Naive thymus-derived CD4-positive, alpha-beta T cell (primary cell): ENCODE measurements at regions of chr3 and their contacts with region 1.

Region 1: DNA sequence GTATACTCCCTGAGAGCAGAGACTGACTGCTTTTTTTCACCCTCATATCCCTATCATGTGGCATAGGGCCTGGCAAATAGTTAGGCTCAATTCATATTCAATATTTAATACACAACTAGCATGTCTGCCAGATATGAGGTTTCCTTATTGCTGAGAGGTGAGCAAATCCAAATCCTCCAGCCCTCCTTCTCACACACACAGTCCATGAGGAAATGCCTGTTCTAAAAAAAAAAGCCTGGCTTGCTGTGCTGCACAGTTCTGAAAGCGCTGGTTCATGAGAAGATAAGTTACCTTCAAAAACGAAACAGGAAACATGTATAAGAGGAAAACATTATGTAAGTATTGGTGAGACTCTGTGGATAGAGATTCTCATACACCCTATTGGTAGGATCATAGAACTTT is 15.5 kb upstream of the ACAP2 start:
- DNase-seq: peak in 7 of 9 donors; percentile 27 to 71 (median 52)
- ATAC-seq: peak; percentile 92
- H3K4me3 ChIP-seq: peak overlapping the region; percentile 45
- H3K4me3 Mint-ChIP-seq: peak overlapping the region; percentile 34 to 90 (median 77)
- H3K27ac ChIP-seq: peak overlapping the region; percentile 59
- H3K27ac Mint-ChIP-seq: peak overlapping the region; percentile 74 to 98 (median 94)
- H3K4me1 ChIP-seq: peaks cover 7 to 16% of the 10 kb centered on the region in 2 donors
- H3K4me1 Mint-ChIP-seq: peaks cover 7 to 37% (median 25%) of the 10 kb centered on the region in 7 donors
- H3K27me3 ChIP-seq: no peaks in the 10 kb centered on the region
- H3K27me3 Mint-ChIP-seq: peaks cover 0 to 5% (median 0%) of the 10 kb centered on the region in 5 donors

Region 2: DNA sequence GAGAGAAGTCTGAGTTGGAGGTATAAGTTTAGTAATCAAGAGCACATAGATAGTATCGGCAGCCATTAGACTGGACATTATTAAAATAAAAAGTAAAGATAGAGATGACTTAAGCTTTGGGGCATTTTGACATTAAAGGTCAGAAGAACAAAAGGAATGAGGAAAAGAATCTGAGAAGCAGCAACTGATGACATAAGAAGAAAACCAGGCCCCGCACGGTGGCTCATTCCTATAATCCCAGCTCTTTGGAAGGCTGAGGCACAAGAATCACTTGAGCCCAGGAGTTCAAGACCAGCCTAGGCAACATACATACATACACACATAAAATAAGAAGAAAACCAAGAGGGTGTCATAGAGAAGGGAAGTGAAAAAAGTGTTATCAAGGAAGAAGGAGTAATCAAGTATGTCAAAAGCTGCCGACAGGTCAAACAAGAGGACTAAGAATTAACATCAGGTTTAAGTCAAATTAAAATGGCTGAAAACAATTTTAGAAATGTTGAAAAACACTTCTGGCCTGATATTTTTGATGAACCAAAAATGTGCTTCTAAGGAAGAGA is 54.4 kb before region 1 on chr3:
- CTCF ChIA-PET with region 1: no interaction called
- POLR2A ChIA-PET with region 1: no interaction called
- intact Hi-C with region 1: loop called in 1 of 2 experiments (anchors 5 kb)
- DNase-seq: no peak
- ATAC-seq: no peak
- H3K4me3 ChIP-seq: no peak overlapping the region
- H3K4me3 Mint-ChIP-seq: no peak overlapping the region
- H3K27ac ChIP-seq: no peak overlapping the region
- H3K27ac Mint-ChIP-seq: no peak overlapping the region
- H3K4me1 ChIP-seq: peaks cover 4 to 10% of the 10 kb centered on the region in 2 donors
- H3K4me1 Mint-ChIP-seq: peaks cover 28 to 50% (median 43%) of the 10 kb centered on the region in 7 donors
- H3K27me3 ChIP-seq: no peaks in the 10 kb centered on the region
- H3K27me3 Mint-ChIP-seq: no peaks in the 10 kb centered on the region

Region 3: GRCh38 chr3:195508185-195508584 is 49.9 kb after region 1 on chr3:
- CTCF ChIA-PET with region 1: no interaction called
- POLR2A ChIA-PET with region 1: no interaction called
- intact Hi-C with region 1: no loop called
- DNase-seq: no peak
- ATAC-seq: no peak
- H3K4me3 ChIP-seq: no peak overlapping the region
- H3K4me3 Mint-ChIP-seq: no peak overlapping the region
- H3K27ac ChIP-seq: no peak overlapping the region
- H3K27ac Mint-ChIP-seq: peak overlapping the region in 8 of 9 donors; percentile 58 to 80 (median 68)
- H3K4me1 ChIP-seq: no peaks in the 10 kb centered on the region
- H3K4me1 Mint-ChIP-seq: peaks cover 3 to 32% (median 26%) of the 10 kb centered on the region in 7 donors
- H3K27me3 ChIP-seq: no peaks in the 10 kb centered on the region
- H3K27me3 Mint-ChIP-seq: no peaks in the 10 kb centered on the region